ENCODE measurements at regions of chr5 and their contacts with region 1.

Region 1: GRCh38 chr5:103808464-103809106 is 246.0 kb upstream of the NUDT12 start:
- DNase-seq: peak; percentile 85
- ATAC-seq: peak; percentile 94
- H3K4me3 ChIP-seq: no peak overlapping the region
- H3K27ac ChIP-seq: no peak overlapping the region
- H3K4me1 ChIP-seq: peaks cover 6% of the 10 kb centered on the region
- H3K27me3 ChIP-seq: no peaks in the 10 kb centered on the region
- CTCF ChIP-seq: peak; percentile 100

Region 2: DNA sequence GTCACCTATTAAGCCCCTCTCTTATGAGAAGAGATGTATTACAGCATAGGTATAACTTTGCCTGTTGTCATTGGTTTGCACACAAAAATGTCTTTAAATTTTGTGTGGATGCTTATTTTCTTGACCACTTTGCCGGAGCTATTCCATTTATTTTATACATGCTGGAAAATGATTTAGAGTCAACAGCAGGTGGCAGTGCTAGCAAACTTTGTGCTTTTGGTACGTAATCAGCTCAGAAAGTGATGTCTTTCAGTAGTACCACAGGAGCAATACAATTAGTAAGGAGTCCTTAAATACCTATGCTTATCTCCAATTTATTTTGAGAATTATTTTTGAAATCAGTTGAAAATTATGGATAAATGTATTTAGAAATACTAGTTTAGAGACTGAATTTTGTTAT is 226.2 kb before region 1 on chr5:
- CTCF ChIA-PET with region 1: interaction called, 16 read pairs
- POLR2A ChIA-PET with region 1: no interaction called
- intact Hi-C with region 1: loop called (anchors 1 kb)
- DNase-seq: peak; percentile 73
- ATAC-seq: peak; percentile 68
- H3K4me3 ChIP-seq: no peak overlapping the region
- H3K27ac ChIP-seq: no peak overlapping the region
- H3K4me1 ChIP-seq: no peaks in the 10 kb centered on the region
- H3K27me3 ChIP-seq: no peaks in the 10 kb centered on the region
- CTCF ChIP-seq: peak; percentile 89

Region 3: GRCh38 chr5:103929338-103930003 is 120.9 kb after region 1 on chr5:
- CTCF ChIA-PET with region 1: no interaction called
- POLR2A ChIA-PET with region 1: interaction called, 14 read pairs
- intact Hi-C with region 1: loop called (anchors 5 kb)
- DNase-seq: peak; percentile 74
- ATAC-seq: peak; percentile 86
- H3K4me3 ChIP-seq: no peak overlapping the region
- H3K27ac ChIP-seq: peak overlapping the region; percentile 10; the same call in 1 of the 2 replicates
- H3K4me1 ChIP-seq: peaks cover 19% of the 10 kb centered on the region
- H3K27me3 ChIP-seq: no peaks in the 10 kb centered on the region
- CTCF ChIP-seq: no peak

Region 4: DNA sequence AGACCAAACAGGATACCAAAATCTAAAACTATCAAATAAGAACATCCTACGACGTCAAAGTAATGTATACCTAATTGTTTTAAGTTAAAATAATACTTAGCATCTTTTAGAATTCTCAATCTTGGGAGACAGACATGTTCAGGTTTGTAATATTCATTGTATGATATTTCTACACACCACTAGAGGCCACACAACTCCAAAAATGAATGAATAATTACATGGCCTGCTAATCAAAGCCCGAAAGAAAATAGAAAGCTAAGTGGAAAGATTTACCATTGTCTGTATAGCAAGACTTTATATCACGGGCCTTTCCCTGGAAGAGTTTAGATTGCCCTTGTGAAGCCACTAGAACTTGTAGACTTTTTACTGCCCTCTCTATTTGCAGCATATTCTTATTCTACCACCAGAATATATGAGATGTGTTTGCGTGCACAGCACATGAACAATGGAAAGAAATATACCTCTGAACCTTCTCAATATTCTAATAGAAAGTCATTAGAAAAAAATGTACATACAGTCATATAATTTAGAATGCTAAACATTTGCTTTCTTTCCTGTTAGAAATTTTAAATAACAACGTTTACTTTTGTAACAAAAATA is 134.1 kb after region 1 on chr5:
- CTCF ChIA-PET with region 1: interaction called, 3 read pairs
- POLR2A ChIA-PET with region 1: no interaction called
- intact Hi-C with region 1: loop called (anchors 2 kb)
- DNase-seq: peak; percentile 51
- ATAC-seq: peak; percentile 73
- H3K4me3 ChIP-seq: no peak overlapping the region
- H3K27ac ChIP-seq: no peak overlapping the region
- H3K4me1 ChIP-seq: 0 out of 2 replicates have a peak, but pooled peaks cover 4% of the 10 kb centered on the region
- H3K27me3 ChIP-seq: no peaks in the 10 kb centered on the region
- CTCF ChIP-seq: peak; percentile 74

Region 5: GRCh38 chr5:103993031-103993430 is 184.4 kb after region 1 on chr5:
- CTCF ChIA-PET with region 1: no interaction called
- POLR2A ChIA-PET with region 1: no interaction called
- intact Hi-C with region 1: no loop called
- DNase-seq: no peak
- ATAC-seq: no peak
- H3K4me3 ChIP-seq: no peak overlapping the region
- H3K27ac ChIP-seq: no peak overlapping the region
- H3K4me1 ChIP-seq: no peaks in the 10 kb centered on the region
- H3K27me3 ChIP-seq: no peaks in the 10 kb centered on the region
- CTCF ChIP-seq: no peak

Region 6: DNA sequence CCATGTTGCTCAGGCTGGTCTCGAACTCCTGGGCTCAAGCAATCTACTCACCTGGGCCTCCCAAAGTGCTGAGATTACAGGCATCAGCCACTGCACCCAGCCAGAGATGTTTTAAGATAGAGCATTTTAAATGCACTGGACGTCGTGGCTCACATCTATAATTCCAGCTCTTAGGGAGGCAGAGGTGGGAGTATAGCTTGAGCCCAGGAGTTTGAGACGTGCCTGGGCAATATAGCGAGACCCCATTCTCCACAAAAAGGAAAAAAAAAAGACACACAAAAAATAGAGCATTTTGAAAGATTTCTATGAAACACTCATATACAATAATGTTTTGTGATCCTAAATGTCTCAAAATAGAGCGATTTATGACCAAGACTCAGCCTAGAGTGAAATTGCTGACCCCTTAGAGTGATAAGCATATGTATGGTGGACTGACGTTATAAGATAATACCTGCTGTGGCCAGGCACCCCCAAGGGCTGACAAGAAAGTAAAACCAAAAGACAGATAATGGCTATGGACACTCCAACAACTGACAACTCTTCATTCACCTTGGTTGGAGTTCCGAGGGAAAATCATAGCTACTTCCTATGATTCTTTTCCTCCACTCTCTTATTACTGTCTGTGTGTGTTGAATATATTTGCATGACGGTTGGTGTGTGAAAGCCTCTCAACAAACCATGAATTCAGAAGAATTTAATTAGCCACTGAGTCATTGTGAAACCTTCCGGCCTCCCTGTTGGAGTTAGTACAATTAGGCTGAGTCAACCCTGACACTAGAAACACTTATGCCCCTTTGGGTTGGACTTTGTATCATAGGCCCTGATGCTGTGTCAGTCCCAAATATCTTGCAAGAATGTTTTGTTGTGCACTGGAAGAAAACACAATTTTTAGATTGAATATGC is 280.5 kb after region 1 on chr5:
- CTCF ChIA-PET with region 1: no interaction called
- POLR2A ChIA-PET with region 1: no interaction called
- intact Hi-C with region 1: loop called (anchors 10 kb)
- DNase-seq: peak; percentile 85
- ATAC-seq: peak; percentile 95
- H3K4me3 ChIP-seq: peak overlapping the region; percentile 16; the same call in 1 of the 2 replicates
- H3K27ac ChIP-seq: peak overlapping the region; percentile 67
- H3K4me1 ChIP-seq: peaks cover 13% of the 10 kb centered on the region
- H3K27me3 ChIP-seq: no peaks in the 10 kb centered on the region
- CTCF ChIP-seq: no peak

Region 7: GRCh38 chr5:104178829-104179456 is 370.4 kb after region 1 on chr5:
- CTCF ChIA-PET with region 1: interaction called, 14 read pairs
- POLR2A ChIA-PET with region 1: no interaction called
- intact Hi-C with region 1: loop called (anchors 1 kb)
- DNase-seq: peak; percentile 91
- ATAC-seq: peak; percentile 87
- H3K4me3 ChIP-seq: no peak overlapping the region
- H3K27ac ChIP-seq: no peak overlapping the region
- H3K4me1 ChIP-seq: peaks cover 1% of the 10 kb centered on the region; the same call in 1 of the 2 replicates
- H3K27me3 ChIP-seq: no peaks in the 10 kb centered on the region
- CTCF ChIP-seq: peak; percentile 86

Measured in PC-3 (cell line).